ENCODE measurements at regions of chr10 and their contacts with region 1.

Region 1: GRCh38 chr10:6239213-6239991 is 36.7 kb downstream of the PFKFB3 start:
- DNase-seq: no peak

Region 2: GRCh38 chr10:6088721-6089390 is 150.5 kb before region 1 on chr10 and contains the start of gene RBM17:
- intact Hi-C with region 1: no loop called
- DNase-seq: peak; percentile 98
- total RNA-seq, gene RBM17: 70.1 TPM

Region 3: GRCh38 chr10:6254201-6254600 is 14.8 kb after region 1 on chr10:
- intact Hi-C with region 1: no loop called
- DNase-seq: no peak

Region 4: GRCh38 chr10:6275022-6275997 is 35.9 kb after region 1 on chr10:
- intact Hi-C with region 1: loop called (anchors 1 kb)
- DNase-seq: peak; percentile 98